ENCODE measurements at regions of chr20 and their contacts with region 1.

Region 1: DNA sequence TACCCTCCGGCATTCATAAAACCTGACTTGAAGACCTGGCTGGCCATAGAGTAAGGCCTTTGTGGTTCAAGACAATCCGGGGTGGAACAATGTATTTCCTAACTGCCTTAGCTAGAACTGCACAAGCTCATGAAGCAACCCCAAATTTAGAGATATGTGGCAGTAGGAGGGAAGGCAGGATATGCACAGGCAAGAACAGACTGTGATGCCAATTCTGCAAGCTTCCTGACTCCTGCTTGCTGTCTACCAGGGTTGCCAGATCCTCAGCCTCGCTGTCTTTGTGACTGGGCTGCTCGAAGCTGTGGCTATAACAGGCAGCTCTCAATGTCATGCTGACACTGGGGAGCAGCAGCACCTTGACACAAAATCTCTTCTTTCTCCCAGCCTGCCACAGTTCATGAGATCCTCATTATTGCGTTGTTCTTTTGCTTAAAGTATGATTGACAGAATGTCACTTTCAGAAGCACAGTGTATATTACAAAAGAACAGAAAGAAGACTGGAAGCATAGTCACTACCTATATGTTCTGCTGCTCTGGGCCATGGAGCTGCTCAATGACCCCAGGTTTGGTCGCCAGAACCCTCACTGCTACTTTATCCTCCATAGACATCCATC is 18.3 kb upstream of the SHLD1 start:
- DNase-seq: peak; percentile 22
- H3K4me3 ChIP-seq: no peak overlapping the region
- H3K27ac ChIP-seq: peak overlapping the region; percentile 9 to 41
- H3K4me1 ChIP-seq: no peaks in the 10 kb centered on the region
- H3K27me3 ChIP-seq: no peaks in the 10 kb centered on the region
- CTCF ChIP-seq: no peak
- POLR2A ChIP-seq: no peak

Region 2: DNA sequence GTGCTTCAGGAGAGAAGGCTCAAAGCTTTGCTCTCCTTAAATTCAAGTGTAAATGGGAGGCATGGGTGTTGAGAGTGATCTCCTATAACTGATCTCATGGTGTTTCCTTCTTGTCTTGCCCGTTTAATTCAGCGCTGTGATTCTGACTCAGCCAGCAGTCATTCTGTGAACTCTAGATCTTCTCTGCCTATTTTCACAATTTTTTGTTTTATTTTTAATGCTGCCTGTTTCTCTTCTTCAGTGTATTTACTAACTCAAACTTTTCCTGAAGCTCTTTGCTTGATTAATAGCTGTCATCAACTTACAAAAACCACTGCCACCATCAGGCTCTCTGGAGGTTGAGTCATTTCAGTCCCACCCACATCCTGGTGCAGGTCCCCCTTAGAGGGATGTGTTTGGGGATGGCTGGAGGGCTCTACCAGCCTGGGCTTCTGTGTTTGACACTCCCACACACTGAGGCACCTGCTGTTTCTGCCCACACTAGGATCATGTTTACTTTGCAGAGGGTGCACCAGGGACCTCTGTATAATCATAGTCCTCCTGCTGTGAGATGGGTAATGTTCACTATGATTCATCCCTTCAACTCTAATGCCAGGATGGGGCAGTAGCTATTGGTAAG is 112.3 kb after region 1 on chr20:
- intact Hi-C with region 1: loop called (anchors 5 kb)
- DNase-seq: no peak
- H3K4me3 ChIP-seq: no peak overlapping the region
- H3K27ac ChIP-seq: peak overlapping the region in 1 of 2 donors; percentile 38
- H3K4me1 ChIP-seq: peaks cover 6% of the 10 kb centered on the region
- H3K27me3 ChIP-seq: no peaks in the 10 kb centered on the region
- CTCF ChIP-seq: no peak
- POLR2A ChIP-seq: no peak

Region 3: GRCh38 chr20:5871459-5872410 is 139.9 kb after region 1 on chr20:
- intact Hi-C with region 1: no loop called
- DNase-seq: no peak
- H3K4me3 ChIP-seq: no peak overlapping the region
- H3K27ac ChIP-seq: no peak overlapping the region
- H3K4me1 ChIP-seq: no peaks in the 10 kb centered on the region
- H3K27me3 ChIP-seq: no peaks in the 10 kb centered on the region
- CTCF ChIP-seq: no peak
- POLR2A ChIP-seq: no peak

Region 4: DNA sequence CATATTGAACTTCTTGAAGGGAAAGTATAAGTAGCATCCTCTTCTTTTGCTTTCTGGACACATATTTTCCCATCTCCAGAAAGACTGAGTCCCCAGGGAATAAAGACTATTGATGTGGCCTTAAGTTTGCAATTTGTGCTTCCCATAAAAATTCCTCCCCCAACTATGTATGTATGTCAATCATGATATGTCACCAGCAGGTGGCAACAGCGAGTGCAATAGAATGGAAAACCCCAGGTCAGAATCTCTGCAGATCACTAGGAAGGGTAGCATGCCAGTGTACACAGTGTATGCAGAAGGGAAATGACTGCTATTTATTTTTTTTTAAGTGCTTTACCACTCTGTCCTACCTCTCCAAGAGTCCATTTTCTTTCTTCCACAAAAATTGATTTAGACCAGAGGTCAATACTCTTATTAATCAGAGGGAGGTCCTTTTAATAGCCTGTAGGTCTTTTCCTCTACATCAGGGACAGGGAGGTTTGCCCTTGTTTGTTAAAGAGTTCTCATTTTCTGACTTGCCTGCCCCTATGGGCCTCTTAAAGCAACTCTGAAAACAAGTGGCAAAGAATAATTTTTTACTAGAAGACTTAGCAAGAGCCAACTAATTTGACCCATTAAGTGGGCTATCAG is 1097.0 kb after region 1 on chr20:
- intact Hi-C with region 1: no loop called
- DNase-seq: peak; percentile 46
- H3K4me3 ChIP-seq: no peak overlapping the region
- H3K27ac ChIP-seq: no peak overlapping the region
- H3K4me1 ChIP-seq: no peaks in the 10 kb centered on the region
- H3K27me3 ChIP-seq: no peaks in the 10 kb centered on the region
- CTCF ChIP-seq: peak in 3 of 4 experiments; percentile 54 to 70 (median 68)
- POLR2A ChIP-seq: no peak